Endothelial cell of umbilical vein (primary cell): ENCODE measurements at regions of chr10 and their contacts with region 1.

Region 1: DNA sequence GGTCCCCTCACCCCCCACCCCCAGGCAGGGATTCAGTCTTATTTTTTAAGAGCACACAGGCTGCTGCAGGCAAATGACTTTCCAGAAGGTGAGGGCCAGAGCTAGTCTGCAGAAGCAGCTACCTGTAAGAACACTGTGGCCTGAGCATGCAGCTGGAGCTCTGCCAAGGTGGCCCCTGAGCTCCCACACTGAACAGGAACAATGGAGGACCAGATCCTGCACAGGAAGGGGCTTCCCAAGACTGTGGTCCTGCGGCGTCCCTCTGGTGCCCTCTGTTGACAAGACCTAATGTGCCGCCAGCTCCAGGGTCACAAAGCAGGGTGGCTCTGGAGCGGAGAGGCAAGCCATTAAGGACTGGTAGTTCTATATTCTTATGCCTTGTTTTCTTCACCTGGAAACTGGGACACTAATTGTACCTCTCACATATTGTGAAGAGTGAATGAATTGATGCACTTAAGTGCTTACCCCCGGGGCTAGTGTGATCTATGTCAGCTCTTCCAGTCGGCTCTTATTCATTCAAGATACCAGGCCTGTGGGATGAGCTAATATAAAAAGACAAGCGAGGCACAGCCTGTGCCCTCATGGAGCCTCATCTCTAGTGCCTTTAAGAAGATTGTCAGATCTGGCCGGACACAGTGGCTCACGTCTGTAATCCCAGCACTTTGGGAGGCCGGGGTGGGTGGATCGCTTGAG is 8.0 kb upstream of the BEND7 start:
- DNase-seq: peak; percentile 69
- H3K4me3 ChIP-seq: no peak overlapping the region
- H3K27ac ChIP-seq: no peak overlapping the region
- H3K4me1 ChIP-seq: no peaks in the 10 kb centered on the region
- H3K27me3 ChIP-seq: peaks cover 5 to 6% of the 10 kb centered on the region in 2 experiments
- CTCF ChIP-seq: peak; percentile 64 to 76
- POLR2A ChIP-seq: no peak

Region 2: DNA sequence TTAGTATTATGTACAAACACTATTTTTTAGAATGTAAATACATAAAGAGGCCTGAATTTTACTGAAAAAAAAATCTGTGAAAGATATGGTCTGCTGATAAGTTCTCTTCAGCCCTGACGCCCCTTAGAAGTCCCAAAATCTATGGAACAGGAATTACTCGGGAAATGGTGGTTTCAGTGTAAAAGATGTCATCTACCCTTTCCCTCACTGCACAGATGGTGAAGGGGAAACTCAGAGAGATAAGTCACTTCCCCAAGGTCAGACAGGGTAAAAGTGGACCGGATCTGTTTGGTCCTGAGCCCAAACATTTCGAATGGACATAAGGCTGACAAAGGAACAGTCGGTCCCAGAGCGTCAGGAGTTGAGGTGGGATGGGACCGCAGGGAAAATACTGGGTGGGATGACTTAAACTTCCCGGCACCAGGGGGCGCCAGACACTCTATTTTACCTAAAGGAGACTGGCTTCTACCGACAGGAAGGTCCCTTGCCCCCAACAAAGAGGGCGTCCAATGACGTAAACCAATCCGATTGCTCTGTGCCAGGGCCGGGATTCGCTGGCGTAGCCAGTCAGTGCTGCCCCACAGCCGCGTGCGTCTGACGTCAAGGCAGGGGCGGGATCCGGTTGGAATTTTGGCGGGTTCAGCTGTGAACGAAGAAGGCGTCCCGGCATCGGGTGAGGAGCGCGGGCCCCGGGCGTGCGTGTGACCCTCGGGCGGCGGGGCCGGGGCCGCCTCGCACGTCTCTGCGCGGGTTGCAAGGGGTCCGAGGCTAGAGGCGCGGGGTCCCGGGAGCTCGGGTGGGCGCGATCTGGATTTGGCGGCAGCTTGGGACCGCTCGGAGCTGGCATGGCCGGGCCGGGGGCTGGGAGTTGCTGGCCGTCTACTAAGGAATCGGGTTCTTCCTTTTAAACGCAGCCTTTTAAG is 375.6 kb before region 1 on chr10 and contains the start of gene MCM10:
- CTCF ChIA-PET with region 1: interaction called, 4 read pairs
- POLR2A ChIA-PET with region 1: no interaction called
- dilution Hi-C with region 1: no loop called
- intact Hi-C with region 1: loop called (anchors 1 kb)
- DNase-seq: peak; percentile 99
- H3K4me3 ChIP-seq: peak within 1 kb of the TSS; percentile 71 to 93 (median 85)
- H3K27ac ChIP-seq: peak within 1 kb of the TSS; percentile 52
- H3K4me1 ChIP-seq: peaks cover 13% of the 10 kb centered on the region
- H3K27me3 ChIP-seq: no peaks in the 10 kb centered on the region
- CTCF ChIP-seq: peak; percentile 85 to 93
- POLR2A ChIP-seq: peak; percentile 49
- total RNA-seq, gene MCM10: 28.7 and 31.6 TPM in 2 replicates

Region 3: DNA sequence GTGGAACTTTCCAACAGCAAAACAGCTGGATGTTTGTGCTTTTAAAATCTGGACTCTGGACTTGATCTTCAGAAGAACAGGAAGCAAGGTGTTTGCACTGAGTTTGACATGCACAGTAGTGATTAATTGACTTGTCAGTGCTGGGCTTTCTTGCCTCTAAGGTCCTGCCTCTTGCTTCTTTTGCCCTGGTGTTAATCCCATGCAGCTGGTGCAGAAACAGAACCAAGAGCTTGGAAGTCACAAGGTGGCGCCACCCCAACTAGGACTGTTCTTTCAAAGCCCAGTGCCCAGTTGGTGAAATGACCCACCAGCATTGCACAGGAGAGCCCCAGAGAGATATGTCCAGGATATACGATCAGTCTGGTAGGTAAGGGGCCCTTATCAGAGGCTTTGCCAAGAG is 121.9 kb before region 1 on chr10:
- CTCF ChIA-PET with region 1: interaction called, 56 read pairs
- POLR2A ChIA-PET with region 1: no interaction called
- dilution Hi-C with region 1: no loop called
- intact Hi-C with region 1: loop called (anchors 1 kb)
- DNase-seq: peak; percentile 25
- H3K4me3 ChIP-seq: no peak overlapping the region
- H3K27ac ChIP-seq: no peak overlapping the region
- H3K4me1 ChIP-seq: no peaks in the 10 kb centered on the region
- H3K27me3 ChIP-seq: peaks cover 2 to 3% of the 10 kb centered on the region in 2 experiments
- CTCF ChIP-seq: peak; percentile 18 to 57
- POLR2A ChIP-seq: no peak

Region 4: GRCh38 chr10:13440185-13441061 is 96.4 kb before region 1 on chr10:
- CTCF ChIA-PET with region 1: interaction called, 12 read pairs
- POLR2A ChIA-PET with region 1: no interaction called
- dilution Hi-C with region 1: no loop called
- intact Hi-C with region 1: no loop called
- DNase-seq: peak; percentile 52
- H3K4me3 ChIP-seq: no peak overlapping the region
- H3K27ac ChIP-seq: no peak overlapping the region
- H3K4me1 ChIP-seq: peaks cover 7% of the 10 kb centered on the region
- H3K27me3 ChIP-seq: peaks cover 11 to 27% of the 10 kb centered on the region in 2 experiments
- CTCF ChIP-seq: peak; percentile 89 to 96
- POLR2A ChIP-seq: no peak

Region 5: DNA sequence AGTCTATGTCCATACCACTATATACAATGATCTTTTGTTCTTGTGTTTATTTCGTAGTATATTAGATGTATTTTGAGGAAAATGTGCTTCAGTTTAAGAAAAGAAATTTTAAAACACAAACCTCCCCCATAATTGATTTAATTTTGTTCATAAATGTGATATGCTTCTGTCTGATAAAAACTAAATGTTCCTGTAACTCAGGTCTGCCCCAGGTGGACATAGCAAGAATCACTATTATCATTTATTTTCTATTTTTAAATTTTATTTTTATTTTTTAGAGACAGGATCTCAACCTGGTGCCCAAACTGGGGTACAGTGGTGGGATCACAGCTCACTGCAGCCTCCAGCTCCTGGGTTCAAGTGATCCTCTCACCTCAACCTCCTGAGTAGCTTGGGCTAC is 51.2 kb before region 1 on chr10:
- CTCF ChIA-PET with region 1: interaction called, 12 read pairs
- POLR2A ChIA-PET with region 1: no interaction called
- dilution Hi-C with region 1: no loop called
- intact Hi-C with region 1: loop called (anchors 2 kb)
- DNase-seq: peak; percentile 6
- H3K4me3 ChIP-seq: no peak overlapping the region
- H3K27ac ChIP-seq: no peak overlapping the region
- H3K4me1 ChIP-seq: no peaks in the 10 kb centered on the region
- H3K27me3 ChIP-seq: no peaks in the 10 kb centered on the region
- CTCF ChIP-seq: peak in 1 of 2 donors; percentile 15
- POLR2A ChIP-seq: no peak

Region 6: DNA sequence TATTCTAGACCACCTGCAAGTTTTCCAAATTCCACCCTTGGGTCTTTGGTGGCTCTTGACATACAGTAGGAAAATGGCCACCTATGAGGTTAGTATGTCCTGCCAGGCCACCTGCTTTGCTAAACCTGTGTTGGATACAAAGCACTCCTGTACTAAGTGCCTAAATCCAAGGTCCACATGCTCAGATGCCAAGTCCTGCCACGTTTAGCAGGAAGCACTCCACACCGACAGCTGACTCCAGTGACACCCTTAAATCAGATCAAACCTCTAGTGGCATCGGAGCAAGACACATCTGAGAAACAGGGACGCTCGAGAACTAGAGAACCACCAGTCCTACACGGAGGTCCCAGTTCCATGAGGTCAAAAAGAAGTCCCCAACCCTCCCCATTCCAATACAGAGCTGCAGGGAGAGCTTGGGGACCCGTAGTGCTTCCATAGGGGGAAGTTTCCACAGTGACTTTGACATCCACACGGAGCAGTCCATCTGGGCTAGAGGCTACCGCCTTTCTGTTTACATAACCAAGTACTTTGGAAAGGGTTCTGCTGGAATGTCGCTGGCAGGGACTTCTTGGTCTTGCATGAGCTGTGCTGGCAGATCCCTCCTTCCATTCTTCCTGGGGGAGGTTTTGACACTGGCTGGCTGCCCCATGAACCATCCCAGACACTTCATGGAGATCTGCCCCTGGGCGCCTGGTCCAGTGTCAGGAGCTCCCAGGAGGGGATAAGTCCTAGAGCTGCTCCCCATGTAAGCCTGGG is 340.5 kb after region 1 on chr10:
- CTCF ChIA-PET with region 1: no interaction called
- POLR2A ChIA-PET with region 1: no interaction called
- dilution Hi-C with region 1: no loop called
- intact Hi-C with region 1: no loop called
- DNase-seq: no peak
- H3K4me3 ChIP-seq: no peak overlapping the region
- H3K27ac ChIP-seq: peak overlapping the region; percentile 32
- H3K4me1 ChIP-seq: peaks cover 54% of the 10 kb centered on the region
- H3K27me3 ChIP-seq: no peaks in the 10 kb centered on the region
- CTCF ChIP-seq: no peak
- POLR2A ChIP-seq: no peak